Testis (tissue), 5 donors: ENCODE measurements at regions of chr11 and their contacts with region 1.

Region 1: GRCh38 chr11:10808553-10809372 is at the start of gene EIF4G2:
- DNase-seq: peak; percentile 99
- H3K4me3 ChIP-seq: peak within 1 kb of the TSS; percentile 92 to 100
- H3K27ac ChIP-seq: peak within 1 kb of the TSS; percentile 99 to 100
- H3K4me1 ChIP-seq: peaks cover 16% of the 10 kb centered on the region
- H3K27me3 ChIP-seq: no peaks in the 10 kb centered on the region
- CTCF ChIP-seq: no peak
- POLR2A ChIP-seq: peak; percentile 95
- total RNA-seq, gene EIF4G2: 451 to 519 TPM

Region 2: GRCh38 chr11:10857709-10858438 is 49.1 kb after region 1 on chr11 and contains the start of gene ZBED5:
- intact Hi-C with region 1: loop called (anchors 5 kb)
- DNase-seq: peak; percentile 99
- H3K4me3 ChIP-seq: peak within 1 kb of the TSS; percentile 92 to 94
- H3K27ac ChIP-seq: peak within 1 kb of the TSS; percentile 97 to 98
- H3K4me1 ChIP-seq: peaks cover 15% of the 10 kb centered on the region
- H3K27me3 ChIP-seq: no peaks in the 10 kb centered on the region
- CTCF ChIP-seq: no peak
- POLR2A ChIP-seq: peak; percentile 85
- total RNA-seq, gene ZBED5: 30.4 to 37.3 TPM